ENCODE measurements at regions of chr10 and their contacts with region 1.

Region 1: GRCh38 chr10:77011874-77012811 is 625.5 kb downstream of the KCNMA1 start:
- DNase-seq: peak in 1 of 2 donors; percentile 73
- H3K4me3 ChIP-seq: peak overlapping the region in 1 of 2 donors; percentile 4
- H3K27ac ChIP-seq: peak overlapping the region; percentile 87 to 94
- H3K4me1 ChIP-seq: peaks cover 14 to 38% of the 10 kb centered on the region in 2 donors
- H3K27me3 ChIP-seq: no peaks in the 10 kb centered on the region
- CTCF ChIP-seq: no peak

Region 2: GRCh38 chr10:75294866-75295701 is 1717.1 kb before region 1 on chr10:
- intact Hi-C with region 1: loop called (anchors 10 kb)
- DNase-seq: peak; percentile 60 to 93
- H3K4me3 ChIP-seq: peak overlapping the region; percentile 79 to 92
- H3K27ac ChIP-seq: peak overlapping the region; percentile 91 to 94
- H3K4me1 ChIP-seq: peaks cover 11 to 23% of the 10 kb centered on the region in 2 donors
- H3K27me3 ChIP-seq: no peaks in the 10 kb centered on the region
- CTCF ChIP-seq: peak in 2 of 3 experiments; percentile 20 to 51

Region 3: GRCh38 chr10:75651417-75651816 is 1360.7 kb before region 1 on chr10:
- intact Hi-C with region 1: loop called (anchors 10 kb)
- DNase-seq: no peak
- H3K4me3 ChIP-seq: no peak overlapping the region
- H3K27ac ChIP-seq: no peak overlapping the region
- H3K4me1 ChIP-seq: peaks cover 12 to 37% of the 10 kb centered on the region in 2 donors
- H3K27me3 ChIP-seq: no peaks in the 10 kb centered on the region
- CTCF ChIP-seq: peak in 1 of 3 experiments; percentile 7

Region 4: GRCh38 chr10:77416311-77417135 is 404.4 kb after region 1 on chr10:
- intact Hi-C with region 1: loop called (anchors 10 kb)
- DNase-seq: peak in 1 of 2 donors; percentile 74
- H3K4me3 ChIP-seq: no peak overlapping the region
- H3K27ac ChIP-seq: peak overlapping the region; percentile 93 to 98
- H3K4me1 ChIP-seq: peaks cover 18 to 89% of the 10 kb centered on the region in 2 donors
- H3K27me3 ChIP-seq: no peaks in the 10 kb centered on the region
- CTCF ChIP-seq: no peak

Measured in ascending aorta (tissue), 2 donors.